Activated CD4-positive, alpha-beta T cell treated with anti-CD3 and anti-CD28 coated beads, Interleukin-2, amount 10 ng/mL, durations not matched to agents 7 days and 5 days (primary cell): ENCODE measurements at regions of chr17 and their contacts with region 1.

Region 1: GRCh38 chr17:38868817-38869525 is 887 bp upstream of the LASP1 start:
- DNase-seq: peak; percentile 86
- H3K4me3 Mint-ChIP-seq: peak overlapping the region; percentile 90
- H3K27ac Mint-ChIP-seq: peak overlapping the region; percentile 96
- H3K4me1 Mint-ChIP-seq: peaks cover 47% of the 10 kb centered on the region
- H3K27me3 Mint-ChIP-seq: no peaks in the 10 kb centered on the region

Region 2: DNA sequence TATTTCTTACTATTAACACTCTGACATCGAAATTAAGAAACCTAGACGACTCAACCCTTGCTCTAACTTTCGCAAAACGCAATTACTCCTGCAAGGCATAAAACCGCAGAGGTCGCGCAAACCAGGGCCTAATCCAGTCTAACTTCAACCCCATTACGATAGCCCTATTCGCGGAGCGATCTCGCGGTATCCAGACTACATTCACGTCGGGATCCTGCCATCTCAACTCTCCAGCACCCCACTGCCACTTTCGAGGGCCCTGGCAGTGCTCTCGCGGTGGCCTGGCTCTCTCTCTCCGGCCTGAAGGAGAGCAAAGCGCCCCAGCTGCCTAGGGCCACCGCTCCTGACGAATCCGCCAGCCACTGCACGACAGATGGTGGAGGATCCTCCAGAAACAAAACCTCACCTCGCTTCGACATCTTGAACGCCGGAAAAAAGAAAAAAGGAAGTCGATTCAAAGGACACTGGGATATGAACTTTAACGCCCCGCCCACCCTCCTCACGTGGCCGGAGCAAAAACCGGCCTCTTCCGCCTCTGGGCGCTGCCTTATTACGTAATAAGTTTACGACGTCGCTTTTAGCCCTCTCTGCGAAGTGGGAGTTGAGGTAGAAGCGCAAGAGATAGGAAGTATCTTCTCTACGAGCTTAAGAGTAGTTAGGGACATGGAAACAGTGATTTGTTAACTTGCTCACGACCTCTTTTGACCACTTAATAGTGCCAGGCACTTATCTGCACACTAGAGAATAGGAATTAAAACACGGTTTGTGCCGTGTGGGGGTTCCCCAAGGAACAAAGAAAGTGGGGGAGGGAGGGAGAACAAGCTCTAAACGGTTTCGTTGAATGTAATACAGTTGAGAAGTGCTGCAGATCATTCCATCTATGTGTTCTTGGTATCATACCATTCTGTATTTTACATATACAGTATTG is 15.4 kb before region 1 on chr17 and contains the start of gene RPL23:
- CTCF ChIA-PET with region 1: interaction called, 16 read pairs
- POLR2A ChIA-PET with region 1: interaction called, 6 read pairs
- DNase-seq: peak; percentile 95
- H3K4me3 Mint-ChIP-seq: peak within 1 kb of the TSS; percentile 92
- H3K27ac Mint-ChIP-seq: peak within 1 kb of the TSS; percentile 98
- H3K4me1 Mint-ChIP-seq: peaks cover 47% of the 10 kb centered on the region
- H3K27me3 Mint-ChIP-seq: no peaks in the 10 kb centered on the region
- total RNA-seq, gene RPL23: 1,147 to 1,160 TPM